A549 (cell line): ENCODE measurements at regions of chr6 and their contacts with region 1.

Region 1: GRCh38 chr6:83514866-83515466 is 2.6 kb downstream of the PRSS35 start:
- DNase-seq: peak; percentile 14 to 57
- ATAC-seq: peak in 1 of 2 experiments; percentile 32; a peak in 1 of 6 replicates
- H3K4me3 ChIP-seq: no peak overlapping the region
- H3K27ac ChIP-seq: no peak overlapping the region
- H3K4me1 ChIP-seq: peaks cover 11% of the 10 kb centered on the region; the same call in 2 of the 3 replicates
- CTCF ChIP-seq: peak; percentile 82
- EP300 ChIP-seq: no peak
- POLR2A ChIP-seq: no peak
- RAD21 ChIP-seq: peak; percentile 84 to 87

Region 2: GRCh38 chr6:83067448-83068413 is 447.2 kb before region 1 on chr6 and contains the start of gene DOP1A:
- CTCF ChIA-PET with region 1: interaction called, 93 read pairs
- POLR2A ChIA-PET with region 1: no interaction called
- DNase-seq: peak; percentile 73 to 90
- ATAC-seq: peak; percentile 94 to 96
- H3K4me3 ChIP-seq: peak within 1 kb of the TSS; percentile 92
- H3K27ac ChIP-seq: peak within 1 kb of the TSS; percentile 72 to 88
- H3K4me1 ChIP-seq: peaks cover 11% of the 10 kb centered on the region; the same call in 1 of the 3 replicates
- CTCF ChIP-seq: peak; percentile 83
- EP300 ChIP-seq: no peak
- POLR2A ChIP-seq: peak; percentile 21; the same call in 1 of the 2 replicates
- RAD21 ChIP-seq: peak; percentile 79 to 83
- polyA plus RNA-seq, gene DOP1A: 5.9 and 7.0 TPM in 2 replicates

Region 3: GRCh38 chr6:83215131-83216047 is 299.6 kb before region 1 on chr6:
- CTCF ChIA-PET with region 1: interaction called, 92 read pairs
- POLR2A ChIA-PET with region 1: no interaction called
- DNase-seq: peak; percentile 10 to 53
- ATAC-seq: peak; percentile 93 to 95
- H3K4me3 ChIP-seq: no peak overlapping the region
- H3K27ac ChIP-seq: no peak overlapping the region
- H3K4me1 ChIP-seq: no peaks in the 10 kb centered on the region
- CTCF ChIP-seq: peak; percentile 56
- EP300 ChIP-seq: no peak
- POLR2A ChIP-seq: no peak
- RAD21 ChIP-seq: peak; percentile 42 to 50; a peak in 4 of 5 replicates

Region 4: GRCh38 chr6:83221889-83222479 is 293.0 kb before region 1 on chr6:
- CTCF ChIA-PET with region 1: interaction called, 92 read pairs
- POLR2A ChIA-PET with region 1: no interaction called
- DNase-seq: peak in 1 of 2 experiments; percentile 21
- ATAC-seq: peak; percentile 54; a peak in 3 of 6 replicates
- H3K4me3 ChIP-seq: no peak overlapping the region
- H3K27ac ChIP-seq: no peak overlapping the region
- H3K4me1 ChIP-seq: peaks cover 4% of the 10 kb centered on the region; the same call in 1 of the 3 replicates
- CTCF ChIP-seq: peak; percentile 59
- EP300 ChIP-seq: no peak
- POLR2A ChIP-seq: no peak
- RAD21 ChIP-seq: peak; percentile 50 to 52; a peak in 4 of 5 replicates

Region 5: DNA sequence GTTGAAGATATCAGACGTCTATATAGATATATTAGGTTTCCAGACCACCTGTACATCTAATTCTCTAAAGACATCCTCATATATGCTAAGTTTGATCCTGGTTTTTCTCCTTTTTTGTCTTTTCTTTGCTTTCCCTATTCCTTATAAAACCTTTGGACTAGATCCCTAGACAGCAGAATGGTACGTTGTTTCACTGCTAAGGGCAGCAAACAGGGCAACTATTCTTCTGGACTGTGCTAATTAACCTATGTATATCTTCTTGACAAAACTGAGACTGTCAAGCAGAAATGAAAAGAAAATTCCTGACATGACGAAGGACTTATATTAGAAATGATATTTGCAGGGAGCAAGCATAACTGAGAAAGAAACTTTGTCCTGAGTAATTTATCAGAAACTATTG is 103.2 kb before region 1 on chr6:
- CTCF ChIA-PET with region 1: interaction called, 75 read pairs
- POLR2A ChIA-PET with region 1: no interaction called
- DNase-seq: no peak
- ATAC-seq: no peak
- H3K4me3 ChIP-seq: no peak overlapping the region
- H3K27ac ChIP-seq: no peak overlapping the region
- H3K4me1 ChIP-seq: no peaks in the 10 kb centered on the region
- CTCF ChIP-seq: no peak
- EP300 ChIP-seq: no peak
- POLR2A ChIP-seq: no peak
- RAD21 ChIP-seq: no peak

Region 6: GRCh38 chr6:83417880-83418663 is 96.9 kb before region 1 on chr6:
- CTCF ChIA-PET with region 1: interaction called, 75 read pairs
- POLR2A ChIA-PET with region 1: no interaction called
- DNase-seq: peak; percentile 33 to 64
- ATAC-seq: peak; percentile 89 to 90
- H3K4me3 ChIP-seq: no peak overlapping the region
- H3K27ac ChIP-seq: no peak overlapping the region
- H3K4me1 ChIP-seq: peaks cover 9% of the 10 kb centered on the region; the same call in 2 of the 3 replicates
- CTCF ChIP-seq: peak; percentile 60
- EP300 ChIP-seq: no peak
- POLR2A ChIP-seq: no peak
- RAD21 ChIP-seq: peak; percentile 59 to 69

Region 7: DNA sequence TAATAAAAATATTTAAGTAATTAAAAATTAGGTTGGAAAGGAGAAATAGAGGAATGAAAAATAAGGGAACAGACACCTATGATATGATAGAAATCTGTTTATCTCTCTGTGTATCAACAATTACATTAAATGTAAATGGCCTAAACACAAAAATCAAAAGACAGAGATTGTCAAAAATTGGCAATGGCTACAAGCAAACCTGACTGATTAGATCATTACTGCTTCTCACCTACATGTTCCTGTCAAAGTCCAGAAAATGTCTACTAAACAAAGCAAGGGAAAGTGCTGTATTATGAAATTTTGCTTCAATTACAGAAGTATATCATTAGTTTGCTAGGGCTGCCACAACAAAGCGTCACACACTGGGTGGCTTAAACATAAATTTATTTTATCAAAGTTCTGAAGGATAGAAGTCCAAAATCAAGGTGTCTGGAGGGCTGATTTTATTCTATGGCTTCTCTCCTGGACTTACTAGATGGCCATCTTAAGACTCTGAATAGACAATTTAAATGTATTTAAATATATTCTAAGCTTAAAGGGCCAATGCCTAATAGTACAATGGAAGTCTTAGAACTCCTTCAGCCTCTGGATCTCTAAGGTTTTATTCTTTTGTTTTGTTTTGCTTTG is 90.5 kb before region 1 on chr6:
- CTCF ChIA-PET with region 1: interaction called, 75 read pairs
- POLR2A ChIA-PET with region 1: no interaction called
- DNase-seq: no peak
- ATAC-seq: no peak
- H3K4me3 ChIP-seq: no peak overlapping the region
- H3K27ac ChIP-seq: no peak overlapping the region
- H3K4me1 ChIP-seq: peaks cover 27% of the 10 kb centered on the region
- CTCF ChIP-seq: no peak
- EP300 ChIP-seq: no peak
- POLR2A ChIP-seq: no peak
- RAD21 ChIP-seq: no peak